Heart left ventricle (tissue), 16 donors: ENCODE measurements at regions of chr12 and their contacts with region 1.

Region 1: GRCh38 chr12:76037130-76038103 is 5.8 kb upstream of the PHLDA1 start:
- DNase-seq: peak in 1 of 5 donors; percentile 32
- ATAC-seq: peak; percentile 36 to 74 (median 72)
- H3K4me3 ChIP-seq: no peak overlapping the region
- H3K27ac ChIP-seq: no peak overlapping the region
- H3K4me1 ChIP-seq: peaks cover 0 to 20% (median 10%) of the 10 kb centered on the region in 12 donors
- H3K27me3 ChIP-seq: no peaks in the 10 kb centered on the region
- CTCF ChIP-seq: peak; percentile 74 to 88 (median 82)
- POLR2A ChIP-seq: no peak

Region 2: GRCh38 chr12:75526655-75527511 is 510.5 kb before region 1 on chr12:
- intact Hi-C with region 1: loop called (anchors 1 to 5 kb)
- DNase-seq: peak in 1 of 5 donors; percentile 28
- ATAC-seq: peak in 2 of 4 donors; percentile 49
- H3K4me3 ChIP-seq: no peak overlapping the region
- H3K27ac ChIP-seq: no peak overlapping the region
- H3K4me1 ChIP-seq: peaks cover 0 to 4% (median 0%) of the 10 kb centered on the region in 12 donors
- H3K27me3 ChIP-seq: no peaks in the 10 kb centered on the region
- CTCF ChIP-seq: peak; percentile 58 to 79 (median 66)
- POLR2A ChIP-seq: no peak

Region 3: GRCh38 chr12:75560167-75560566 is 477.2 kb before region 1 on chr12:
- intact Hi-C with region 1: loop called in 7 of 10 experiments (anchors 2 to 10 kb)
- DNase-seq: no peak
- ATAC-seq: peak in 3 of 4 donors; percentile 68 to 83 (median 80)
- H3K4me3 ChIP-seq: no peak overlapping the region
- H3K27ac ChIP-seq: no peak overlapping the region
- H3K4me1 ChIP-seq: peaks cover 0 to 11% (median 0%) of the 10 kb centered on the region in 12 donors
- H3K27me3 ChIP-seq: no peaks in the 10 kb centered on the region
- CTCF ChIP-seq: peak in 11 of 12 donors; percentile 10 to 68 (median 48)
- POLR2A ChIP-seq: no peak

Region 4: GRCh38 chr12:75623631-75624118 is 413.7 kb before region 1 on chr12:
- intact Hi-C with region 1: loop called in 8 of 10 experiments (anchors 5 to 10 kb)
- DNase-seq: peak in 1 of 5 donors; percentile 27
- ATAC-seq: peak; percentile 88 to 95 (median 94)
- H3K4me3 ChIP-seq: no peak overlapping the region
- H3K27ac ChIP-seq: peak overlapping the region in 3 of 12 donors; percentile 21 to 45 (median 36)
- H3K4me1 ChIP-seq: peaks cover 0 to 10% (median 0%) of the 10 kb centered on the region in 12 donors
- H3K27me3 ChIP-seq: no peaks in the 10 kb centered on the region
- CTCF ChIP-seq: peak in 10 of 12 donors; percentile 5 to 50 (median 38)
- POLR2A ChIP-seq: no peak

Region 5: DNA sequence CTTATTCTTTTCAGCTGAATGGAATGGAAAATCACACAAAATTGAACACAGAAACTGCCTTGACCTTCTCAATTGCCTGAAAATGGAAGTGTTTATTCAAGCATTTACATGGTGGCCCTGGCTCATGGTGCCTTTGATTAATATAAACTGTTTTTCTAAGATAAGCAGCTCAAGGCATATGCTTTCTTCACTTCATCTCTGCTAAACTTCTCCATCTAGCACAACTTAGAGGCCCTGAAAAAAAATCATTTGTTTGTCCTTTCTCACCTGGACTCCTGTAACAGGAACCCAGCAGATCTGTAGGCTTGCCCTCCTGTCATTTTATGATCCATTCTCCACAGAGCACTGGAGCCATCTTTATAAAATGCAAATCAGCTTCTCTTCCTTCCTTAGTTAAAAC is 408.5 kb before region 1 on chr12:
- intact Hi-C with region 1: loop called in 8 of 10 experiments (anchors 5 to 10 kb)
- DNase-seq: no peak
- ATAC-seq: no peak
- H3K4me3 ChIP-seq: no peak overlapping the region
- H3K27ac ChIP-seq: no peak overlapping the region
- H3K4me1 ChIP-seq: peaks cover 0 to 12% (median 0%) of the 10 kb centered on the region in 12 donors
- H3K27me3 ChIP-seq: no peaks in the 10 kb centered on the region
- CTCF ChIP-seq: no peak
- POLR2A ChIP-seq: no peak

Region 6: DNA sequence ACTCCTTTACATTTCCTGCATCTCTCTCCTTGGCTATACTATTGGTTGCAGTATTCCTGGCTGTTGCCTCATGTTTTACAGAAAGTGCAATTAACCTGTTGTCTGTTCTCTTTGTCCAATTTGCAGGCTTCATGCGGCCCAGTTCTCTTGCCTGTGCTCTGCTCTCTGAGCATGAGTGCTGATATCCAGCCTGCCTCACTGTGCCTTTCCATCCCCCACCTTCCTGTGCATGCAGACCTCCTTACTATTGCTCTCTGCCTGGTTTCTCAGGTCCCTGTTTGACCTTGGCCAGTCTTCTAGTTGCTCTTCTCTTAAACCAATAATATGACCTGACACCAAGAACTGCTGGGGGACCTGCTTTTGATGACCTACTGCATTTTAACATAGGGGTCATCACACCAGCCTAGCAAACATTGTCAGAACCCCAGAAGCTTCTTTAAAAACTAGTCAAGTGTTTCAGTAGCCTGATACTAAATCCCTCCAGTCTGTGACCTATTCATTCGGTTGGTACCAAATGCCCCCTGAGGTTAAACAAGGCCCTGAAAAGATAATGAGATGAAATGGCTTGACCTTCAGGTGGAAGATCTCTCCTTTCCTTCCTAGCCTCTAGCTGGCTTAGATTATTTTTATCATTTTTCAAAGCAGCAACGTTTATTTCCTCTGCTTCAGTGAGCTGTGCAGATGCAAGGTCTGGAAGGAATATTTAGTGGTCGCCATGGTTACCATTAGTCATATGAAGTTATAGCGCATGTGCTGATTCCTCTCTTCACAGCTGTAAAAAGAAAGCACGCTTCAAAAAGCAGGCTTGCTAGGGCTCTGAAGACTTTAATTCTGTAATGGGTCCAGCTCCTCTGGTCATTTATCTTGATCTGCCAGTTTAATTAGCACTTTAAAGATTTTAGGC is 222.3 kb before region 1 on chr12:
- intact Hi-C with region 1: loop called in 6 of 10 experiments (anchors 5 to 10 kb)
- DNase-seq: peak in 2 of 5 donors; percentile 34 to 46
- ATAC-seq: peak; percentile 75 to 94 (median 87)
- H3K4me3 ChIP-seq: no peak overlapping the region
- H3K27ac ChIP-seq: peak overlapping the region in 7 of 12 donors; percentile 11 to 60 (median 47)
- H3K4me1 ChIP-seq: peaks cover 0 to 18% (median 12%) of the 10 kb centered on the region in 12 donors
- H3K27me3 ChIP-seq: no peaks in the 10 kb centered on the region
- CTCF ChIP-seq: no peak
- POLR2A ChIP-seq: no peak

Region 7: DNA sequence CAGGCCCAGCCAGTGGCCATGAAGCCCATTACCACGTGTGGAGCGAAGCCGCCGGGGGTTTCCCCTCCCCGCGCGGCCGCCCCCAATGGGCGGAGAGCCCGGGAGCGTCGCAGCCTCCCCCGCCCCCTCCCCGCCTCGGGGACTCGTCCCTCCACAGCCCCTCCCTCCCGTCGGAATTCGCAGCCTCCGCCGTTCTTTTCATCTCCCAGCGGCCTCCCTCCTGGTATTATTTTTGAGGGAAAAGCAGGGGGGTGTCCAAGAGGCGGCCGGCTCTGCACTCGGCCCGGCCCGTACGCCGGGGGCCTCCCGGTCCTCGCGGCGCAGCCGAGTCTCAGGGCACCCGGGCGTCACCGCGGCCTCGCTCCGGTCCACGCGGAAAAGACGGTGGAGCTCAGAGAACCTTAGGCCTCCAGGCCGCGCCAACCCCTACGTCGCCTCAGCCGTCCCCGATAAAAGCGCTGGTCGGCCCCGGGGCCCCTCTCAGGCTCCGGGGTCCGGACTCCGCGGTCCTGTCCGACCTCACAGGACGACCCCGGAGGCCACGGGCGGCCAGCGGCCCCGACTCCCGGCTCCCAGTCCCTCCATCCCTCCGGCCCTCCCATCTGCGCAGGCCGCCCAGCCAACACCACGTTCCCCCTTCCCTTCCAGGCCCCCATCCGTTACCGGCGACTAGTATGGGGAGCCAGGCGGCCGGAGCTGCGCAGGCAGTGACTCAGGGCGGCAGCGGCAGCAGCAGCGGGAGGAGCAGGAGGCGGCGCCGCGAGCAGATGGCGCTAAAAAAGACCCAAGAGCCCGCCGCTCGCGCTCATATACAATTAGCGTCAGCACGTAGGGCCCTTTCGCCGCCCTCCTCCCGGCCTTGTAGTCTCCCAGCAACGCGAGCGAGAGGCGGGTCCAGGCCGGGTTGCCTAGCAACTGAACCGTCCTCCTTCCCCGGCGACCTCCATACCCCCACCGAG is 46.8 kb after region 1 on chr12 and contains the start of gene NAP1L1:
- intact Hi-C with region 1: loop called in 1 of 10 experiments (anchors 5 kb)
- DNase-seq: peak; percentile 98 to 99 (median 99)
- ATAC-seq: peak; percentile 96 to 99 (median 97)
- H3K4me3 ChIP-seq: peak within 1 kb of the TSS; percentile 76 to 97 (median 90)
- H3K27ac ChIP-seq: peak within 1 kb of the TSS; percentile 95 to 100 (median 99)
- H3K4me1 ChIP-seq: peaks cover 0 to 49% (median 28%) of the 10 kb centered on the region in 12 donors
- H3K27me3 ChIP-seq: no peaks in the 10 kb centered on the region
- CTCF ChIP-seq: no peak
- POLR2A ChIP-seq: peak; percentile 26 to 96
- total RNA-seq, gene NAP1L1: 191 to 359 (median 247) TPM